AG04449 (cell line): ENCODE measurements at regions of chr22 and their contacts with region 1.

Region 1: GRCh38 chr22:23857606-23858483 is at the start of gene SLC2A11:
- DNase-seq: peak; percentile 65
- H3K4me3 ChIP-seq: peak within 1 kb of the TSS; percentile 72
- CTCF ChIP-seq: peak; percentile 23

Region 2: DNA sequence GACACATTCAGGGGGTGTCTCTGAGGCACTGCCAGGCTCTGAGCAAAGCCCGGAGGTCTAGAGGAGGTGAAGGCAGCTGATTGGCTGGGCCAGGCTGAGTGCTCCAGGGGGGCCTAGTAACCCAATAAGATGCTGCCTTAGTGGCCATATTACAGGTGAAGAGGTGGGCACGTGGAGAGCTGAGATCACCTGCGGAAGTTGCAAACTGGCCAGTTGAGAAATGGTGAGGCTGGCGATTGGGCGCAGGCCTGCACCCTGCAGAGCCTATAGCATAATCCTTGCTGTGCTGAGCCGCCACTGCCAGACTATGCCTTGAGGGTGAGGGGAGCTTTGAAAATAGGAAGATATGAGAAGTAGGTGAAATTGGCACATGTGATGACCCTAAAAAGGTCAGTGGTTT is 40.7 kb before region 1 on chr22:
- CTCF ChIA-PET with region 1: no interaction called
- POLR2A ChIA-PET with region 1: no interaction called
- DNase-seq: no peak
- H3K4me3 ChIP-seq: no peak overlapping the region
- CTCF ChIP-seq: no peak

Region 3: GRCh38 chr22:23828800-23829680 is 28.8 kb before region 1 on chr22:
- CTCF ChIA-PET with region 1: no interaction called
- POLR2A ChIA-PET with region 1: no interaction called
- DNase-seq: no peak
- H3K4me3 ChIP-seq: no peak overlapping the region
- CTCF ChIP-seq: no peak

Region 4: DNA sequence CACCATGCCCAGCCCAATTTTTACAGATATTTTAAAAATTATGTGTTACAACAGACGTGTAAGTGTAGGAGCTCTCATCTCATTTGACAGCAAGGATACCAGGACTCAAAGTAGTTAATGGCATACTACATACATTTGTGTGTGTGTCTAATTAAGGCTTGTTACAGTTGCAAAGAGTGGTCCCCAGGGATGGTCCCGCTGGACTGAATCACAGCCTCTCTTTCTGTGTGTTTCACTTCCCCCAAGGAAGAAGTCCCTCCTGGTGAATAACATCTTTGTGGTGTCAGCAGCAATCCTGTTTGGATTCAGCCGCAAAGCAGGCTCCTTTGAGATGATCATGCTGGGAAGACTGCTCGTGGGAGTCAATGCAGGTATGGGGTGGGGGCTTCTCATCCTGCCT is 17.0 kb after region 1 on chr22:
- CTCF ChIA-PET with region 1: interaction called, 20 read pairs
- POLR2A ChIA-PET with region 1: no interaction called
- DNase-seq: no peak
- H3K4me3 ChIP-seq: no peak overlapping the region
- CTCF ChIP-seq: no peak

Region 5: GRCh38 chr22:23925020-23925606 is 67.3 kb after region 1 on chr22:
- CTCF ChIA-PET with region 1: no interaction called
- POLR2A ChIA-PET with region 1: no interaction called
- DNase-seq: no peak
- H3K4me3 ChIP-seq: no peak overlapping the region
- CTCF ChIP-seq: no peak